ENCODE measurements at regions of chr14 and their contacts with region 1.

Region 1: GRCh38 chr14:95515596-95516552 is 576 bp downstream of the SYNE3 start:
- DNase-seq: peak; percentile 89
- ATAC-seq: peak; percentile 85
- H3K4me3 Mint-ChIP-seq: peak overlapping the region; percentile 94
- H3K27ac Mint-ChIP-seq: peak overlapping the region; percentile 93
- H3K4me1 Mint-ChIP-seq: peaks cover 79% of the 10 kb centered on the region
- H3K27me3 Mint-ChIP-seq: no peaks in the 10 kb centered on the region
- CTCF ChIP-seq: no peak

Region 2: DNA sequence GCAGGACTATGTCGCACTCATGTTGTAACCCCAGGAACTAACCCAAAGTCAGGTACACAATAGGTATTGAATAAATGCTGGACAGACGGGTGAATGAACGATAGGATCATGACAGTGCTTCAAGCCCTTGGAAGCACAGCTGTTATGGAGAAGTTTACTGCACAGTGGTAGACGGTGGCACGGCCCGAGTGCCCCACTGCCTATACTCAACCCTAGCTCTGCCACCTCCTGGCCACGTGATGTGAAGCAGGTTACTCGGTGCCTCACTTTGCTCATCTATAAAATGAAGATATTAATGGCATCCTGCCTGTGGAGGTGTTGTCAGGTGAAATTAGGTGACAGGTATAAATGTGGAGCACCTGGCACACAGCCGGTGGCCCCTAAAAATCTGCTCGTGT is 1545.3 kb before region 1 on chr14:
- CTCF ChIA-PET with region 1: no interaction called
- POLR2A ChIA-PET with region 1: interaction called, 3 read pairs
- intact Hi-C with region 1: loop called (anchors 5 kb)
- DNase-seq: peak; percentile 42
- ATAC-seq: peak; percentile 51
- H3K4me3 Mint-ChIP-seq: peak overlapping the region; percentile 89
- H3K27ac Mint-ChIP-seq: peak overlapping the region; percentile 89
- H3K4me1 Mint-ChIP-seq: peaks cover 70% of the 10 kb centered on the region
- H3K27me3 Mint-ChIP-seq: peaks cover 8% of the 10 kb centered on the region
- CTCF ChIP-seq: no peak

Region 3: DNA sequence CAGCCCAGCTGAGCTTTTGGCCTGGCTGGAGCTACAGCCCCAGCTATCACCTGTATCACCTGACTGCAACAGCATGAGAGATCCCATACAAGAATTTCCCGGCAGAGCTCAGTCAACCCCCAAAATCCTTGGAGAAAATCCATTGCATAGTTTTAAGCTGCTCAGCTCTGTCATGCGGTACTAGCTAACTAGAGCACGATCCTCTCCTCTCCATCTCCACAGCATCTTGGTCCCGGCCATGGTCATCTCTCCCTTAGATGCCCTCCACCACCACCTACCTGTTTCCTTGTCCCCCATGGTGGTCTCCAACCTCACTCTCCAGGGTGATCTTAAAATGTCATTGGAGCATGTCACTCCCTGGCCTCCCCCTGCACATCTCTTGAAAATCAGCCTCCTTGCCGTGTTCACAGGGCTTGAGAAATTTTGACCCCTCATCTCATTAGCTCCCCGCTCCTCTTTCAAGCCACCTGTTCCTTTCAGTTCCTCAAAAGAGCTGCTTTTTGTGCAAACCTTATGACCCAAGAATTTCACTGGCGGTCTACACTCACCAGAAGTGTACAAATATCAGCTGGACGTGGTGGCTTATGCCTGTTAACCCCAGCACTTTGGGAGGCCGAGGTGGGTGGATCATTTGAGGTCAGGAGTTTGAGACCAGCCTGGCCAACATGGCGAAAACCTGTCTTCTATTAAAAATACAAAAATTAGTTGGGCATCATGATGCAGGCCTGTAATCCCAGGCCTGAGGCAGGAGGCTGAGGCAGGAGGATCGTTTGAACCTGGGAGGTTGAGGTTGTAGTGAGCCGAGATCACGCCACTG is 188.1 kb before region 1 on chr14:
- CTCF ChIA-PET with region 1: no interaction called
- POLR2A ChIA-PET with region 1: interaction called, 5 read pairs
- intact Hi-C with region 1: loop called (anchors 2 kb)
- DNase-seq: peak; percentile 48
- ATAC-seq: peak; percentile 84
- H3K4me3 Mint-ChIP-seq: peak overlapping the region; percentile 76
- H3K27ac Mint-ChIP-seq: peak overlapping the region; percentile 97
- H3K4me1 Mint-ChIP-seq: peaks cover 53% of the 10 kb centered on the region
- H3K27me3 Mint-ChIP-seq: no peaks in the 10 kb centered on the region
- CTCF ChIP-seq: no peak

Region 4: GRCh38 chr14:95460647-95461478 is 55.0 kb before region 1 on chr14:
- CTCF ChIA-PET with region 1: interaction called, 7 read pairs
- POLR2A ChIA-PET with region 1: interaction called, 21 read pairs
- intact Hi-C with region 1: loop called (anchors 2 kb)
- DNase-seq: no peak
- ATAC-seq: no peak
- H3K4me3 Mint-ChIP-seq: no peak overlapping the region
- H3K27ac Mint-ChIP-seq: no peak overlapping the region
- H3K4me1 Mint-ChIP-seq: peaks cover 65% of the 10 kb centered on the region
- H3K27me3 Mint-ChIP-seq: no peaks in the 10 kb centered on the region
- CTCF ChIP-seq: no peak

Region 5: DNA sequence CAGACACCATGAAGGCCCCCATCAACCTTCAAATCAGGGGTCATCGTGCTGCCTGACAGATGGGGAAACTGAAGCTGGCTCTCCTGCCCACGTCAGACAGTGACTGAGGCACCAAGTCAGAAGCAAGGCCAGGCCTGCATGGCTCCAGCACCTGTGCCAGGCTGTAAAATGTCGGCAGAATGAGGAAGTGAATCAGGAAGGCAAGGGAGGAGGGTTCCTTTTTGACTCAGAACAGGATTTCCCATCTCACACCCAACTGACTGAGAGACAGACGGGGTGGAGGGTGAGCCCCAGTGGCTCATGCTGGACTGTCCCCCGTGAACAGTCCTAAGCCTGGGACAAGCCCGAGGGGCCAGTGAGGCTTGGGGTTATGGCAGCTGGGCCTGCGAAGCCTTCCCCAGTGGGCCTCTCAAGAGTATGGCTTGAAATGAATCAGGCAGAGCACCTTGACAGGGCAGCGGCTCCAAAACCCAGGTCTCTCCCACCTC is 20.3 kb before region 1 on chr14:
- CTCF ChIA-PET with region 1: interaction called, 10 read pairs
- POLR2A ChIA-PET with region 1: interaction called, 113 read pairs
- intact Hi-C with region 1: loop called (anchors 1 kb)
- DNase-seq: peak; percentile 60
- ATAC-seq: peak; percentile 87
- H3K4me3 Mint-ChIP-seq: peak overlapping the region; percentile 62
- H3K27ac Mint-ChIP-seq: peak overlapping the region; percentile 91
- H3K4me1 Mint-ChIP-seq: peaks cover 86% of the 10 kb centered on the region
- H3K27me3 Mint-ChIP-seq: no peaks in the 10 kb centered on the region
- CTCF ChIP-seq: no peak

Region 6: GRCh38 chr14:95577067-95577800 is 61.4 kb after region 1 on chr14:
- CTCF ChIA-PET with region 1: no interaction called
- POLR2A ChIA-PET with region 1: no interaction called
- intact Hi-C with region 1: no loop called
- DNase-seq: no peak
- ATAC-seq: peak; percentile 95
- H3K4me3 Mint-ChIP-seq: peak overlapping the region; percentile 13
- H3K27ac Mint-ChIP-seq: no peak overlapping the region
- H3K4me1 Mint-ChIP-seq: peaks cover 26% of the 10 kb centered on the region
- H3K27me3 Mint-ChIP-seq: peaks cover 45% of the 10 kb centered on the region
- CTCF ChIP-seq: no peak